PC-9 (cell line): ENCODE measurements at regions of chr5 and their contacts with region 1.

Region 1: GRCh38 chr5:134184155-134185135 is 7.7 kb upstream of the SKP1 start:
- DNase-seq: peak; percentile 39 to 65
- H3K4me3 ChIP-seq: no peak overlapping the region
- H3K27ac ChIP-seq: no peak overlapping the region
- H3K4me1 ChIP-seq: no peaks in the 10 kb centered on the region
- H3K27me3 ChIP-seq: no peaks in the 10 kb centered on the region
- CTCF ChIP-seq: peak; percentile 90

Region 2: DNA sequence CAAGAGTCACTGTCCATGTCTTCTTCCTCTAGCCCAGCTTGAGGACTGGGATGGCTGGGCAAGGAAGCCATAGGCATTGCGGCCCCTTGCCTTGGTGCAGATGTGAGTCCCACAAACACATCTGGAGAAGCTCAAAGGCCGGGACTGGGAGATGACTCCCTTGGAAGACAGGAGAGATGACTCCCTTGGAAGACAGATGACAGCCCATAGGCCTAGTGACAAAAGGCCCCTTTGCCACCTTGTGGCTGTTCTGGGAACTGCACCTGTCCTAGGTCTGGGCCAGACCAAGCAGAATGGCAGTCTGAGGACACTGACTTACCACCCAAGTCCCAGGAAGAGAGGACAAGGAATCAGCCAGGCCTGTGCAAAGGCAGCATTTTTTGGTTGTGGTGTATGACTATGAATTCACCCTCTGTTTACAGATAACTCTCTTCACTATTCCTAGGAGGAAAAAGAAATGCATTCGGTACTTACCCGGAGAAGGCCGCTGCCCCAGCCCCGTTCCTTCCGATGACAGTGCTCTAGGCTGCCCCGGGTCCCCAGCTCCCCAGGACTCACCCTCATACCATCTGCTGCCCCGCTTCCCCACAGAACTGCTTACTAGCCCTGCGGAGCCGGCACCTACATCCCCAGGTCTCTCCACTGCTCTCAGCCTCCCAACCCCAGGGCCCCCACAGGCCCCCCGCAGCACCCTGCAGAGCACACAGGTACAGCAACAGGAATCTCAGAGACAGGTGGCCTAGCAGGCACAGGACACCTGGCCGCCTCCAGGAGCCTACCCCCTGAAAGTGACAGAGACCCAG is 38.5 kb before region 1 on chr5:
- CTCF ChIA-PET with region 1: no interaction called
- POLR2A ChIA-PET with region 1: no interaction called
- intact Hi-C with region 1: no loop called
- DNase-seq: peak; percentile 49 to 71
- H3K4me3 ChIP-seq: no peak overlapping the region
- H3K27ac ChIP-seq: no peak overlapping the region
- H3K4me1 ChIP-seq: peaks cover 17% of the 10 kb centered on the region
- H3K27me3 ChIP-seq: no peaks in the 10 kb centered on the region
- CTCF ChIP-seq: peak; percentile 96

Region 3: DNA sequence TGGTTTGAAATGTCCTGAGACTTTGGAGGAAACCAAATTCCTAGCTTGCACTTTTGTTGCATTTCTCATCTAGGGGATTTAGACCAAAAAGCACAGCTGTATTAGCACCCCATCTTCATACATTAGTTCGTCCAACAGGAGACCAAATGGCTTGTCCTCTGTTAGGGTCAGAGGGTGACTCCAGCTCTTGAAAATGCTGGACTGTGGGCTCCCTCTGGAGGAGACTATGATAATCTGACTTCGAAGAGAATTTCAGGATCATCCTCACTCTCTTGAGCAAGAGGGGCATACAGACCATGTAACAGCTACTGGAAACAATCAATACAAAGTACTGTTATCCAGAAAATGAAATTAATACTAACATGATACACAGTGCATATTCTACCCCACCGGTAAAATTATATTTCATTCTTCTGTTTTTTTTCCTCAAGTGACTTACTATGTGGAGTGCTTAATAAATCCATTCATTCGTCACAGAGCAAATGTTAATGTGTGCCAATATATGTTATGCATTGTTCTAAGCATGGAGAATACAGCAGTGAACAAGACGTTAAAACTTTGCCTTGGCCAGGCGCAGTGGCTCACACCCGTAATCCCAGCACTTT is 105.2 kb after region 1 on chr5:
- CTCF ChIA-PET with region 1: interaction called, 12 read pairs
- POLR2A ChIA-PET with region 1: no interaction called
- intact Hi-C with region 1: loop called (anchors 1 kb)
- DNase-seq: peak; percentile 48 to 74
- H3K4me3 ChIP-seq: no peak overlapping the region
- H3K27ac ChIP-seq: no peak overlapping the region
- H3K4me1 ChIP-seq: no peaks in the 10 kb centered on the region
- H3K27me3 ChIP-seq: no peaks in the 10 kb centered on the region
- CTCF ChIP-seq: peak; percentile 91

Region 4: DNA sequence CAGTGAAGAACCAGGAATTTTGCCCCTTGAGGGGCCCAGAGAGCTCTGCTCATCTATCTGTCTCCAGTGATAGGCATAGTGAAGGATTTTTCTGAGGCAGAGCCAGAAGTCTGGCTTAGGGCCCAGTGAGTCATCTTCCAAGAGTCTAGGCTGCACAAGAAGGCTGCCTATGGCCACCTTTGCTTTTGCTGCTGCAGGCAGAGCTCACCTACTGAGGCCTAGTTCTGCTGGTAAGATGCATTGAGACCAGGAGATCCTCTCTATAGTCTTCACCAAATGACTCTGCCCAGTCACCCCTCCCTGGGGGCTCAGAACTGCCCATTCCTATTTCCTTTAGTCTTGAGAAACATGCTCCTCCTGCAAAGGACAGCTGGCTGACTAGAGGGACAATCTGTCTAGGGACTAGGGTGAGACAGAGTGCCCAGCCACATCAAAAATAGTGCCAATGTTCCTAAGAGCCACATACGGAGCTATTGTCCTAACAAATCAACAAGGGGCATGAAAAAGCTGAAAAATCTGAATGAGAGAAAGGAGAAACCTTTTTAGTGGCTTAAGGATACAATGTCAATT is 267.6 kb after region 1 on chr5:
- CTCF ChIA-PET with region 1: no interaction called
- POLR2A ChIA-PET with region 1: no interaction called
- intact Hi-C with region 1: no loop called
- DNase-seq: peak; percentile 59 to 65
- H3K4me3 ChIP-seq: no peak overlapping the region
- H3K27ac ChIP-seq: no peak overlapping the region
- H3K4me1 ChIP-seq: peaks cover 14% of the 10 kb centered on the region
- H3K27me3 ChIP-seq: no peaks in the 10 kb centered on the region
- CTCF ChIP-seq: no peak